ENCODE measurements at regions of chr5 and their contacts with region 1.

Region 1: DNA sequence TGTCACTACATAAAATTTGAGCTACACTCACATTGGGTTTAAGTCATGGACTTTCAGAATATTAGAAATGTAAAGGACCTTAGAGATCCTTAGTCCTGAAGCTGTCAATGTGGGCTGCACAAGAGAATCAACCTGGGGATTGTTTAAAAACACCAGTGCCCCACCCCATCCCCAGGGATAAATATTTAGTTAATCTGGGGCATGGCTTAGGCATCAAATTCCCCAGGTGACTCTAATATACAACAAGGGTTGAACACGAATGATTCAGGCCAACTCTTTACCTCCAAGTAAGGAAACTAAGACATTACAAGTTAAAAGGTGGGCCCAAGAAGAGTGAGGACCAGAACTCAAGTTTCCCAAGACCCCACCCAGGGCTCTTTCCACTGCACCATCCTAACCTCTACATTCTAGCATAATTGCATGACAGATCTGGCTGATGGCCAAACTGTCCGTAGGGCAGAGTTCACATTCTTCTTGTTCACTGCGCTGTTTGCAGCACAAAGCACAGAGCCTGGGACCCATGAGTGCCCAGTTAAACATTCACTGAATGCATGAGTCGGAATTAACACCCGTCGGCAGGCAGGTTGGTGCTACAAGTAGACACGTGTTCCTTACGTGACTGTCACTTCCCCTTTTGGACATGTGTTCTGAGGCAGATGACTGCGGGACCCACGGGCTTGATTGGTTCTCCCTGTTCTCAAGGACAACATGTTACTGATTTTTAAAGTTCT is 25.2 kb downstream of the CYFIP2 start:
- DNase-seq: no peak
- H3K4me3 Mint-ChIP-seq: no peak overlapping the region
- H3K27ac Mint-ChIP-seq: peak overlapping the region; percentile 83
- H3K4me1 Mint-ChIP-seq: peaks cover 58% of the 10 kb centered on the region
- H3K27me3 Mint-ChIP-seq: no peaks in the 10 kb centered on the region

Region 2: GRCh38 chr5:156824800-156825199 is 466.3 kb before region 1 on chr5:
- intact Hi-C with region 1: no loop called
- DNase-seq: no peak
- H3K4me3 Mint-ChIP-seq: no peak overlapping the region
- H3K27ac Mint-ChIP-seq: no peak overlapping the region
- H3K4me1 Mint-ChIP-seq: no peaks in the 10 kb centered on the region
- H3K27me3 Mint-ChIP-seq: peaks cover 21% of the 10 kb centered on the region

Region 3: GRCh38 chr5:157259699-157260098 is 31.4 kb before region 1 on chr5:
- intact Hi-C with region 1: loop called (anchors 5 kb)
- DNase-seq: no peak
- H3K4me3 Mint-ChIP-seq: no peak overlapping the region
- H3K27ac Mint-ChIP-seq: no peak overlapping the region
- H3K4me1 Mint-ChIP-seq: peaks cover 65% of the 10 kb centered on the region
- H3K27me3 Mint-ChIP-seq: no peaks in the 10 kb centered on the region

Measured in activated T-helper 2 cell treated with anti-CD3 and anti-CD28 coated beads, Interferon-gamma antibody, Interleukin-2, Interleukin-4, amounts not matched to agents 10 μg/mL and 5 μg/mL and 100 μg/mL, durations not matched to agents 14 hours and 24 hours and 36 hours (primary cell).